H1 (cell line): ENCODE measurements at regions of chr21 and their contacts with region 1.

Region 1: DNA sequence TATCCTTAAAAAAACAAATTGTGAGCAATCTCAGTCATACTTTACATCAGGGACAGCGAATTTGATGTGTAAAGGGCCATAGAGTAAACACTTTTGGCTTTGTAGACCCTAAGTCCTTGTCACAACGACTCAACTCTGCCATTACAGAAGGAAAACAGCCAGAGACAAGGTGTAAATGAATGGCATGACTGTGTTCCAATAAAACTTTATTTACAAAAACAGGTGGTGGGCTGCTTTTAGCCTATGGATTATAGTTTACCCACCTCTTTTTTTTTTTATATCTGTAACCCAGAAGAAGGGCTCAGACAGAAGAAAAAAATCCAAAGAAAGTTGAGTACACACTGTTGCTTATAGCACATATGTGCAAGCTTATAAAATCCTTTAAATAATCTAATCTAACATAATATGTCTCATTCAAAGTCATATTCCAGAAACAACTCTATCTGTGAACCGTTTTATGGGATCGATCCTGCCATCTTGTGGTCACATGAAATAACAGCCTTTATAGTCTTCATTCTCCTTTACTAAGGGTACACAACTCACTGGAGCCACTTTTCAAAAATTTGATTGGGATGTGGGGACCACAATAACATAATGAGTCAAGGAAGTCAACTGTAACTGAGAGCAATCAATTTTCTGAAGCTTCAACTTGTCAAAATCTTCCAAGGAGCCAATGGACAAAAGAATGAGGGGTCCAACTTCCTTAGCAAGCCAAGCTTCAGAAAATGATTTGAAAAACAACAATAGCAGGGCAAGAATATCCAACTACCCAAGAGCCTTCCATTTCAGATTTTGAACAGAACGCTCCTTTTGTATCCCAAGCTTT is 142.2 kb upstream of the KRTAP19-8 start:
- DNase-seq: no peak
- H3K4me3 ChIP-seq: no peak overlapping the region
- H3K27ac ChIP-seq: no peak overlapping the region
- H3K4me1 ChIP-seq: no peaks in the 10 kb centered on the region; a peak in 1 of 7 replicates
- H3K27me3 ChIP-seq: no peaks in the 10 kb centered on the region
- CTCF ChIP-seq: peak in 2 of 3 experiments; percentile 46 to 55; a peak in 2 of 4 replicates
- EP300 ChIP-seq: no peak
- POLR2A ChIP-seq: no peak
- RAD21 ChIP-seq: peak; percentile 61 to 63

Region 2: GRCh38 chr21:31098576-31099005 is 81.9 kb before region 1 on chr21:
- CTCF ChIA-PET with region 1: interaction called, 51 read pairs
- POLR2A ChIA-PET with region 1: no interaction called
- DNase-seq: peak; percentile 36 to 91
- H3K4me3 ChIP-seq: no peak overlapping the region
- H3K27ac ChIP-seq: no peak overlapping the region
- H3K4me1 ChIP-seq: peaks cover 0 to 2% (median 0%) of the 10 kb centered on the region in 4 experiments; a peak in 2 of 7 replicates
- H3K27me3 ChIP-seq: no peaks in the 10 kb centered on the region; a peak in 1 of 7 replicates
- CTCF ChIP-seq: peak; percentile 86 to 95 (median 89)
- EP300 ChIP-seq: no peak
- POLR2A ChIP-seq: no peak
- RAD21 ChIP-seq: peak; percentile 94 to 96

Region 3: DNA sequence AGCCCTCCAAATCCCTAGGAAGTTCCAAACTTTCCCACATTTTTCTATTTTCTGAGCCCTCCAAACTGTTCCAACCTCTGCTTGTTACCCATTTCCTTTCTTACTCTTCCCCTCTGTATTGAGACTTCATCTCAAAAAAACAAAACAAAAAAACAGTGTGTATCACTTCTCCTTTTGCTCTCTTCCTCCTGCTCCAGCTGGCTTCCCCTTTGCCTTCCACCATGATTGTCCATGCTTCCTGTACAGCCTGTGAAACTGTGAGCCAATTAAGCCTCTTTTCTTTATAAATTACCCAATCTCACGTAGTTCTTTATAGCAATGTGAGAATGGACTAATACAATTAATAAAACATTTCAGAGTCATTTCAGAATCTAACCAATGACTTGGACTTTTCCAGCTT is 72.6 kb before region 1 on chr21:
- CTCF ChIA-PET with region 1: interaction called, 34 read pairs
- POLR2A ChIA-PET with region 1: no interaction called
- DNase-seq: no peak
- H3K4me3 ChIP-seq: no peak overlapping the region
- H3K27ac ChIP-seq: no peak overlapping the region
- H3K4me1 ChIP-seq: peaks cover 0 to 2% (median 0%) of the 10 kb centered on the region in 4 experiments; a peak in 1 of 7 replicates
- H3K27me3 ChIP-seq: no peaks in the 10 kb centered on the region
- CTCF ChIP-seq: no peak
- EP300 ChIP-seq: no peak
- POLR2A ChIP-seq: no peak
- RAD21 ChIP-seq: no peak

Region 4: DNA sequence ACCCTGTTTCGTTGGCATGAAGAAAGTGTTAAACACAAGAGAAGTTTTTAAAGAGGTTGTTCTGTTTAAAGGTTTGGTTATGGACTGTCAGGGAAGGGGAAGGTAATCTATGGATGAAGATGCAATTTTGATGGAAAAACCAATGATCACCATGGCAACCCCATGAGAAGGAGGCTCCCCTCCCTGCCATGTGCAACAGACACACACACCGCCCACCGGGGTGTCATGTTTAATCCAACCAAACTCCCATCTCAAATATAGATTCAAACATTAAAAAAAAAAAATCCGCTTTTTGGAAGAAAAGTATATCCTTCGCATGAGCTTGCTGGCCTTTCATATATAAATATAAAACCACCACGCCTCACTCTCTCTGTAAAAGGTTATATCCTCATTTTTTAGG is 61.3 kb before region 1 on chr21:
- CTCF ChIA-PET with region 1: interaction called, 13 read pairs
- POLR2A ChIA-PET with region 1: no interaction called
- DNase-seq: no peak
- H3K4me3 ChIP-seq: no peak overlapping the region
- H3K27ac ChIP-seq: no peak overlapping the region
- H3K4me1 ChIP-seq: peaks cover 0 to 3% (median 2%) of the 10 kb centered on the region in 4 experiments; a peak in 3 of 7 replicates
- H3K27me3 ChIP-seq: no peaks in the 10 kb centered on the region
- CTCF ChIP-seq: no peak
- EP300 ChIP-seq: no peak
- POLR2A ChIP-seq: no peak
- RAD21 ChIP-seq: no peak

Region 5: GRCh38 chr21:31140676-31141075 is 39.8 kb before region 1 on chr21:
- CTCF ChIA-PET with region 1: no interaction called
- POLR2A ChIA-PET with region 1: no interaction called
- DNase-seq: no peak
- H3K4me3 ChIP-seq: no peak overlapping the region
- H3K27ac ChIP-seq: no peak overlapping the region
- H3K4me1 ChIP-seq: peaks cover 0 to 5% (median 3%) of the 10 kb centered on the region in 4 experiments; a peak in 2 of 7 replicates
- H3K27me3 ChIP-seq: no peaks in the 10 kb centered on the region; a peak in 1 of 7 replicates
- CTCF ChIP-seq: no peak
- EP300 ChIP-seq: no peak
- POLR2A ChIP-seq: no peak
- RAD21 ChIP-seq: no peak

Region 6: GRCh38 chr21:31158789-31159581 is 21.5 kb before region 1 on chr21:
- CTCF ChIA-PET with region 1: interaction called, 19 read pairs
- POLR2A ChIA-PET with region 1: no interaction called
- DNase-seq: no peak
- H3K4me3 ChIP-seq: no peak overlapping the region
- H3K27ac ChIP-seq: peak overlapping the region; percentile 54; the same call in 1 of the 2 replicates
- H3K4me1 ChIP-seq: peaks cover 7 to 22% (median 12%) of the 10 kb centered on the region in 4 experiments
- H3K27me3 ChIP-seq: no peaks in the 10 kb centered on the region; a peak in 1 of 7 replicates
- CTCF ChIP-seq: no peak
- EP300 ChIP-seq: no peak
- POLR2A ChIP-seq: no peak
- RAD21 ChIP-seq: no peak

Region 7: DNA sequence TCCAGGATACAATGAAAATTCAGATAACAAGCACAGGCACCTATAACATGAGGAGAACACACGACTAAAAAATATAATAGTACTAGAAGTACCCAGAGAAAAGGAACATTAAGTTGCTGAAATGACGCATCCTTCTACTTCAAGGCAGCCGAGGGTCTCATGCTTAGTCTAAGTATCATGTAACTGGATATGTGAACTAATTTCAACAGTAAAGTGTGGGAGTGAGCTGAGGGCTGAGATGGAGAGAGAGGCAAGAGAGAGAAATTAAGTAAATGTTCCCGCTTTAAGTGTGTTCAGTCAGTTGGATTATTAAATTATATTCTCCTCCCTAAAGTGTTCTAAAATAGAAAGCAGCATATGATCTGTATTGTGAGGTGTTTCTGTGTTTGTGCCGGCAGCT is 10.0 kb after region 1 on chr21:
- CTCF ChIA-PET with region 1: interaction called, 35 read pairs
- POLR2A ChIA-PET with region 1: no interaction called
- DNase-seq: no peak
- H3K4me3 ChIP-seq: no peak overlapping the region
- H3K27ac ChIP-seq: no peak overlapping the region
- H3K4me1 ChIP-seq: peaks cover 0 to 6% (median 3%) of the 10 kb centered on the region in 4 experiments; a peak in 3 of 7 replicates
- H3K27me3 ChIP-seq: peaks cover 0 to 1% (median 0%) of the 10 kb centered on the region in 4 experiments; a peak in 1 of 7 replicates
- CTCF ChIP-seq: no peak
- EP300 ChIP-seq: no peak
- POLR2A ChIP-seq: no peak
- RAD21 ChIP-seq: no peak

Region 8: GRCh38 chr21:31198575-31198974 is 18.1 kb after region 1 on chr21:
- CTCF ChIA-PET with region 1: interaction called, 16 read pairs
- POLR2A ChIA-PET with region 1: no interaction called
- DNase-seq: no peak
- H3K4me3 ChIP-seq: no peak overlapping the region
- H3K27ac ChIP-seq: no peak overlapping the region
- H3K4me1 ChIP-seq: peaks cover 0 to 6% (median 0%) of the 10 kb centered on the region in 4 experiments; a peak in 1 of 7 replicates
- H3K27me3 ChIP-seq: no peaks in the 10 kb centered on the region
- CTCF ChIP-seq: peak in 2 of 3 experiments; percentile 27 to 47; a peak in 2 of 4 replicates
- EP300 ChIP-seq: no peak
- POLR2A ChIP-seq: no peak
- RAD21 ChIP-seq: peak; percentile 58 to 72